B cell (primary cell): ENCODE measurements at regions of chr10 and their contacts with region 1.

Region 1: GRCh38 chr10:89217057-89217990 is 10.2 kb upstream of the CH25H start:
- DNase-seq: peak; percentile 71
- ATAC-seq: peak; percentile 47
- H3K4me3 ChIP-seq: no peak overlapping the region
- H3K4me3 Mint-ChIP-seq: no peak overlapping the region
- H3K27ac ChIP-seq: peak overlapping the region in 1 of 2 donors; percentile 45
- H3K27ac Mint-ChIP-seq: peak overlapping the region; percentile 68
- H3K4me1 ChIP-seq: peaks cover 5 to 6% of the 10 kb centered on the region in 2 donors
- H3K4me1 Mint-ChIP-seq: peaks cover 8% of the 10 kb centered on the region
- H3K27me3 ChIP-seq: no peaks in the 10 kb centered on the region
- H3K27me3 Mint-ChIP-seq: no peaks in the 10 kb centered on the region
- CTCF ChIP-seq: peak; percentile 78

Region 2: GRCh38 chr10:89029785-89030437 is 187.4 kb before region 1 on chr10:
- CTCF ChIA-PET with region 1: interaction called, 92 read pairs
- POLR2A ChIA-PET with region 1: no interaction called
- intact Hi-C with region 1: loop called (anchors 1 kb)
- DNase-seq: peak; percentile 76
- ATAC-seq: peak; percentile 72
- H3K4me3 ChIP-seq: no peak overlapping the region
- H3K4me3 Mint-ChIP-seq: no peak overlapping the region
- H3K27ac ChIP-seq: no peak overlapping the region
- H3K27ac Mint-ChIP-seq: no peak overlapping the region
- H3K4me1 ChIP-seq: peaks cover 8% of the 10 kb centered on the region in 2 donors
- H3K4me1 Mint-ChIP-seq: peaks cover 12% of the 10 kb centered on the region
- H3K27me3 ChIP-seq: no peaks in the 10 kb centered on the region
- H3K27me3 Mint-ChIP-seq: no peaks in the 10 kb centered on the region
- CTCF ChIP-seq: peak; percentile 95

Region 3: GRCh38 chr10:89074120-89074519 is 143.2 kb before region 1 on chr10:
- CTCF ChIA-PET with region 1: no interaction called
- POLR2A ChIA-PET with region 1: no interaction called
- intact Hi-C with region 1: no loop called
- DNase-seq: no peak
- ATAC-seq: no peak
- H3K4me3 ChIP-seq: no peak overlapping the region
- H3K4me3 Mint-ChIP-seq: no peak overlapping the region
- H3K27ac ChIP-seq: no peak overlapping the region
- H3K27ac Mint-ChIP-seq: no peak overlapping the region
- H3K4me1 ChIP-seq: no peaks in the 10 kb centered on the region
- H3K4me1 Mint-ChIP-seq: peaks cover 2% of the 10 kb centered on the region
- H3K27me3 ChIP-seq: no peaks in the 10 kb centered on the region
- H3K27me3 Mint-ChIP-seq: peaks cover 22% of the 10 kb centered on the region
- CTCF ChIP-seq: no peak

Region 4: GRCh38 chr10:89228136-89228535 is 10.8 kb after region 1 on chr10:
- CTCF ChIA-PET with region 1: interaction called, 22 read pairs
- POLR2A ChIA-PET with region 1: no interaction called
- intact Hi-C with region 1: no loop called
- DNase-seq: no peak
- ATAC-seq: no peak
- H3K4me3 ChIP-seq: no peak overlapping the region
- H3K4me3 Mint-ChIP-seq: no peak overlapping the region
- H3K27ac ChIP-seq: no peak overlapping the region
- H3K27ac Mint-ChIP-seq: no peak overlapping the region
- H3K4me1 ChIP-seq: no peaks in the 10 kb centered on the region
- H3K4me1 Mint-ChIP-seq: peaks cover 7% of the 10 kb centered on the region
- H3K27me3 ChIP-seq: no peaks in the 10 kb centered on the region
- H3K27me3 Mint-ChIP-seq: no peaks in the 10 kb centered on the region
- CTCF ChIP-seq: no peak

Region 5: DNA sequence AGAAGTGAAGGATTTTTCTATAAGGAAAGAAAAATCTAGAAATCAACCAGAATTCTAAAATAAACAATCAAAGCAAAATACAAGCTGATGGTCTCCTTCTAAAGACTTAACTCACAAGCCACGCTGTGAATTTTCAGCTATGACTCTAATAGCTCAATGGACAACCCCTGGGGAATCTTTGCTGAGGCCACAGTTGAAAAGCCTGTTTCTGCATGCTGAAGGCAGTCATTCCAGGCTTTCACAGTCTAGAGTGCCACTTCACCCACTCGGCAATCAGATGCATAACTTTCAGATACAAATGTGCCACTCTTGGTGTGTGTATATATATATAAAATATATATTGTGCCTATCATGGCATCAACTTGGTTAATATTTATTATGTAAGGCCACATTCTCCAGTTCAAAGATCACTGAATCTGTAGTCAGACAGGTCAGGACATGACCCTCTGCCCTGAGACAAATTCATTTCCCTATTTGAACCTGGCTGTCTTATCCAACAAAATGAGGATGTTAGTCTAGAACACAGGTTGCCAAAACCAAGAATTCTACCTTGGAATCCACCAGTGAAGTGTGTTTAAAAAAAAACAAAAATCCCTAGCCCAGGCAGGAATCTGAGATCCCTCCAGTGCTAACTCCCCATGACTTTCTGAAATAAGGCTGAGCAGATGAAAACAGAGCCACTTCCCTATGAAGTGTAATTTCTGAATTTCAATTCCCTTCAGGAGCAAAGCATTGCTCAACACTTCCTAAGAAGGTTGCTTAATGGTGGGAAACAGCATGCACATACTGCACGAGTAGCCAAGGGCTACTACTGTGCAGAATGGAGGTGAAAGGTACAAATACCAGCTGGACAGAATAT is 24.4 kb after region 1 on chr10:
- CTCF ChIA-PET with region 1: interaction called, 71 read pairs
- POLR2A ChIA-PET with region 1: no interaction called
- intact Hi-C with region 1: no loop called
- DNase-seq: no peak
- ATAC-seq: no peak
- H3K4me3 ChIP-seq: no peak overlapping the region
- H3K4me3 Mint-ChIP-seq: no peak overlapping the region
- H3K27ac ChIP-seq: no peak overlapping the region
- H3K27ac Mint-ChIP-seq: peak overlapping the region; percentile 13
- H3K4me1 ChIP-seq: peaks cover 31 to 41% of the 10 kb centered on the region in 2 donors
- H3K4me1 Mint-ChIP-seq: peaks cover 41% of the 10 kb centered on the region
- H3K27me3 ChIP-seq: no peaks in the 10 kb centered on the region
- H3K27me3 Mint-ChIP-seq: no peaks in the 10 kb centered on the region
- CTCF ChIP-seq: no peak

Region 6: GRCh38 chr10:89369156-89370105 is 152.1 kb after region 1 on chr10:
- CTCF ChIA-PET with region 1: interaction called, 13 read pairs
- POLR2A ChIA-PET with region 1: no interaction called
- intact Hi-C with region 1: no loop called
- DNase-seq: peak; percentile 38
- ATAC-seq: no peak
- H3K4me3 ChIP-seq: no peak overlapping the region
- H3K4me3 Mint-ChIP-seq: no peak overlapping the region
- H3K27ac ChIP-seq: no peak overlapping the region
- H3K27ac Mint-ChIP-seq: no peak overlapping the region
- H3K4me1 ChIP-seq: peaks cover 0 to 3% of the 10 kb centered on the region in 2 donors
- H3K4me1 Mint-ChIP-seq: peaks cover 8% of the 10 kb centered on the region
- H3K27me3 ChIP-seq: no peaks in the 10 kb centered on the region
- H3K27me3 Mint-ChIP-seq: peaks cover 3% of the 10 kb centered on the region
- CTCF ChIP-seq: peak; percentile 63